Right cardiac atrium (tissue), 5 donors: ENCODE measurements at regions of chrX and their contacts with region 1.

Region 1: GRCh38 chrX:10482261-10482660 is 138.1 kb downstream of the MID1 start:
- DNase-seq: peak; percentile 29 to 56 (median 50)
- ATAC-seq: peak; percentile 42 to 63
- H3K4me3 ChIP-seq: no peak overlapping the region
- H3K27ac ChIP-seq: peak overlapping the region; percentile 42
- H3K4me1 ChIP-seq: peaks cover 6% of the 10 kb centered on the region
- H3K27me3 ChIP-seq: no peaks in the 10 kb centered on the region

Region 2: GRCh38 chrX:10514891-10515290 is 32.6 kb after region 1 on chrX:
- intact Hi-C with region 1: loop called in 1 of 4 experiments (anchors 5 kb)
- DNase-seq: no peak
- ATAC-seq: peak in 1 of 2 donors; percentile 57
- H3K4me3 ChIP-seq: no peak overlapping the region
- H3K27ac ChIP-seq: peak overlapping the region; percentile 13
- H3K4me1 ChIP-seq: peaks cover 1% of the 10 kb centered on the region
- H3K27me3 ChIP-seq: no peaks in the 10 kb centered on the region

Region 3: GRCh38 chrX:10615931-10616775 is 133.9 kb after region 1 on chrX:
- intact Hi-C with region 1: loop called in 1 of 4 experiments (anchors 10 kb)
- DNase-seq: peak; percentile 28 to 58 (median 55)
- ATAC-seq: peak; percentile 53 to 55
- H3K4me3 ChIP-seq: peak overlapping the region; percentile 20
- H3K27ac ChIP-seq: peak overlapping the region; percentile 19
- H3K4me1 ChIP-seq: peaks cover 1% of the 10 kb centered on the region
- H3K27me3 ChIP-seq: no peaks in the 10 kb centered on the region